ENCODE measurements at regions of chr22 and their contacts with region 1.

Region 1: GRCh38 chr22:23281406-23282088 is 101.2 kb downstream of the BCR start:
- DNase-seq: peak; percentile 89
- H3K4me3 Mint-ChIP-seq: no peak overlapping the region
- H3K27ac Mint-ChIP-seq: no peak overlapping the region
- H3K4me1 Mint-ChIP-seq: peaks cover 23% of the 10 kb centered on the region
- H3K27me3 Mint-ChIP-seq: no peaks in the 10 kb centered on the region

Region 2: DNA sequence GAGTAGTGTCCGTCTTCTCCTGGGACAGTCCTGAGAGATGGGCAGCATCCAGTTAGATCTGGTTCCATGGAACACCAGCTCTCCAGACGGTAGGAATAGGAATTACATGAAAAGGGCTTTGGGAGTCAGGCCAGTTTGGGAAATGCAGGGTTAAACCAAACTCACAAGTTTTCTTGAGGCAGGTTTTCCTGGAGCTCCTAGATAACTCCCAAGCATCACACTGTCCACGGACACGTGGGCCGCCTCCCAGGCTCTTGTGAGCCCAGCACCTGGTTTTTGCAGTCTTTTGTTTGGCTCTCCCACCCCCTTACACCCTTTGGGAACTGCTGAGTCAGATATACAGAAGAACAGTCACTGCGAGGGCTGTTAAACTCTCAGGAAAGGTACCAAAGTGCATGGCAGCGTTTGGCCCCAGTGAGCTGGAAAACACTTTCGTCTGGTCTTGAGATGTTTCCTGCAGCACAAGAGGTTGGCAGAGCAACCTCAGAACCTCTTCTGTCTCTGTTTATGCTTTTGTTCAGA is 11.3 kb before region 1 on chr22:
- CTCF ChIA-PET with region 1: interaction called, 10 read pairs
- DNase-seq: no peak
- H3K4me3 Mint-ChIP-seq: no peak overlapping the region
- H3K27ac Mint-ChIP-seq: no peak overlapping the region
- H3K4me1 Mint-ChIP-seq: no peaks in the 10 kb centered on the region
- H3K27me3 Mint-ChIP-seq: no peaks in the 10 kb centered on the region